ENCODE measurements at regions of chr6 and their contacts with region 1.

Region 1: DNA sequence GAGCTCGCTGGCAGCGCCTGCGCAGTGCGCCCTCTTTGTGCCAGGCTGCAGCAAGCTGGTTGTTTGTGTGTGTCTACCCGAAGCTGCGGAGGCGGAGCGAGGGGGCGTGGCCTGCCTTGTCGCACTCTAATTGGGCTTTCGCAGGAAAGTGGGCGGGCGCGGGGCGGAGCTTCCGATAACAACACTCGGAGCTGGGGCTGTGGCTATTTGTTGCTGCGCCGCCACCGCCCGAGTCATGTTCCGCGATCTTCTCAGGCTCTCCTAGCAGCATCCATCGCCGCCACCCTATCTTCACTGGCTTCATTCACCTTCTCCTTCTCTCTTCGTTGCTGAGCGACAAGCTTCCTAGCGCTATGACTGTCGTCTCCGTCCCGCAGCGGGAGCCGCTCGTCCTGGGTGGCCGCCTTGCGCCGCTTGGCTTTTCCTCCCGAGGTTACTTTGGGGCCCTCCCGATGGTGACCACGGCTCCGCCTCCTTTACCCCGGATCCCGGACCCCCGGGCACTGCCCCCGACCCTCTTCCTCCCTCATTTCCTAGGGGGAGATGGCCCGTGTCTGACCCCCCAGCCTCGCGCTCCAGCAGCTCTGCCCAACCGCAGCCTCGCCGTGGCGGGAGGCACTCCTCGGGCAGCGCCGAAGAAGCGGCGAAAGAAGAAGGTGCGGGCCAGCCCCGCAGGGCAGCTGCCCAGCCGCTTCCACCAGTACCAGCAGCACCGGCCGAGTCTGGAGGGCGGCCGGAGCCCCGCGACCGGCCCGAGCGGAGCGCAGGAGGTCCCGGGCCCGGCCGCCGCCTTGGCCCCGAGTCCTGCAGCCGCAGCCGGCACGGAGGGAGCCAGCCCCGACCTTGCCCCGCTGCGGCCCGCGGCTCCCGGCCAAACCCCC is at the start of gene PNRC1:
- DNase-seq: peak; percentile 100
- H3K4me3 Mint-ChIP-seq: peak within 1 kb of the TSS; percentile 92
- H3K27ac Mint-ChIP-seq: peak within 1 kb of the TSS; percentile 95
- H3K4me1 Mint-ChIP-seq: peaks cover 24% of the 10 kb centered on the region
- H3K27me3 Mint-ChIP-seq: no peaks in the 10 kb centered on the region
- total RNA-seq, gene PNRC1: 60.7 and 66.0 TPM in 2 replicates

Region 2: DNA sequence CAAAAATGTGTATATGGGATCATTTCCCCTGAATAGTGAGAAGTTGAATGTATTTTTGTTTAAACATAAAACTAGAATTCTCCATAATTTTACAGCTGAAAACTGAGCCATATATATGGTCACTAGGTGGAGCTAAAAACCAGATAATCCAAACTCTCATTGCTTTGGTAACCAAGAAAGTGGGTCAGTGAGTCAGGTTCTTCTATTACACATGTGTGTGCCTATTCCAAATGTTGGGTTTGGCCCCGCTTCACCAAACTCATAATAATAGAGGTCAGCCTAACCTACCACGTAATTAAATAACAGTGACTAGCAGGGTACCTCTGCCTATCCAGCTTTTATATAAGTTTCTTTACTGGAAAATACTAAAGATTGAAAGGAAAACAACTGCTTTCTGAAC is 98.1 kb before region 1 on chr6:
- intact Hi-C with region 1: loop called (anchors 5 kb)
- DNase-seq: no peak
- H3K4me3 Mint-ChIP-seq: no peak overlapping the region
- H3K27ac Mint-ChIP-seq: no peak overlapping the region
- H3K4me1 Mint-ChIP-seq: no peaks in the 10 kb centered on the region
- H3K27me3 Mint-ChIP-seq: peaks cover 10% of the 10 kb centered on the region

Region 3: GRCh38 chr6:89066940-89067646 is 13.7 kb before region 1 on chr6:
- intact Hi-C with region 1: no loop called
- DNase-seq: no peak
- H3K4me3 Mint-ChIP-seq: no peak overlapping the region
- H3K27ac Mint-ChIP-seq: no peak overlapping the region
- H3K4me1 Mint-ChIP-seq: no peaks in the 10 kb centered on the region
- H3K27me3 Mint-ChIP-seq: peaks cover 14% of the 10 kb centered on the region

Region 4: DNA sequence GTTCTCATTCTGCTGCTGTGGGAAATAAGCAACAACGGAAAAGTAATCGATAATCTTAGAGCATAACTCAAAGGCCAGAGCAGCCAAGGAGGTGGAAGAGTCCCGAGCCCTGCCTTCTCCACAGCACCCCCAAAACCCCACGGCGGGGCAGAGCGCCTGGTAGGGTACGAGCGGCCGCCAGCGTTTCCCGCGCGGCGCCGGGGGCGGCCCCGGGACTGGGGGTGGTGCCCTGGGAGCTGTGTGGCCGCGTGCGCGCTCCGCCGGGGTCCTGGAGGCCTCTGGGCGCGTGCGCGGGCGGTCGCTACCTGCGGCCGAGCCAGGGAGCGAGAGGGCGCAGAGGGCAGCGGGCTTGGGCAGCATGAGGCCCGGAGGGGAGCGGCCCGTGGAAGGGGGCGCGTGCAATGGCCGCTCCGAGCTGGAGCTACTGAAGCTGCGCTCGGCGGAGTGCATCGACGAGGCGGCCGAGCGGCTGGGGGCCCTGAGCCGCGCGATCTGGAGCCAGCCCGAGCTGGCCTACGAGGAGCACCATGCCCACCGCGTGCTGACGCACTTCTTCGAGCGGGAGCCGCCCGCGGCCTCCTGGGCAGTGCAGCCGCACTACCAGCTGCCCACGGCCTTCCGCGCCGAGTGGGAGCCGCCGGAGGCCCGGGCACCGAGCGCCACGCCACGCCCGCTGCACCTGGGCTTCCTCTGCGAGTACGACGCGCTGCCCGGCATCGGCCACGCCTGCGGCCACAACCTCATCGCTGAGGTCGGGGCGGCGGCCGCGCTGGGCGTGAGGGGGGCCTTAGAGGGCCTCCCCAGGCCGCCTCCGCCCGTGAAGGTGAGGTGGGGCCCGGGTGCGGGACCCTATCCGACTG is 65.2 kb after region 1 on chr6 and contains the start of gene PM20D2:
- intact Hi-C with region 1: loop called (anchors 1 kb)
- DNase-seq: peak; percentile 62
- H3K4me3 Mint-ChIP-seq: peak within 1 kb of the TSS; percentile 89
- H3K27ac Mint-ChIP-seq: peak within 1 kb of the TSS; percentile 98
- H3K4me1 Mint-ChIP-seq: peaks cover 35% of the 10 kb centered on the region
- H3K27me3 Mint-ChIP-seq: peaks cover 8% of the 10 kb centered on the region
- total RNA-seq, gene PM20D2: 14.8 and 15.3 TPM in 2 replicates

Region 5: GRCh38 chr6:89260832-89261231 is 180.1 kb after region 1 on chr6:
- intact Hi-C with region 1: no loop called
- DNase-seq: no peak
- H3K4me3 Mint-ChIP-seq: no peak overlapping the region
- H3K27ac Mint-ChIP-seq: no peak overlapping the region
- H3K4me1 Mint-ChIP-seq: no peaks in the 10 kb centered on the region
- H3K27me3 Mint-ChIP-seq: peaks cover 4% of the 10 kb centered on the region

Region 6: DNA sequence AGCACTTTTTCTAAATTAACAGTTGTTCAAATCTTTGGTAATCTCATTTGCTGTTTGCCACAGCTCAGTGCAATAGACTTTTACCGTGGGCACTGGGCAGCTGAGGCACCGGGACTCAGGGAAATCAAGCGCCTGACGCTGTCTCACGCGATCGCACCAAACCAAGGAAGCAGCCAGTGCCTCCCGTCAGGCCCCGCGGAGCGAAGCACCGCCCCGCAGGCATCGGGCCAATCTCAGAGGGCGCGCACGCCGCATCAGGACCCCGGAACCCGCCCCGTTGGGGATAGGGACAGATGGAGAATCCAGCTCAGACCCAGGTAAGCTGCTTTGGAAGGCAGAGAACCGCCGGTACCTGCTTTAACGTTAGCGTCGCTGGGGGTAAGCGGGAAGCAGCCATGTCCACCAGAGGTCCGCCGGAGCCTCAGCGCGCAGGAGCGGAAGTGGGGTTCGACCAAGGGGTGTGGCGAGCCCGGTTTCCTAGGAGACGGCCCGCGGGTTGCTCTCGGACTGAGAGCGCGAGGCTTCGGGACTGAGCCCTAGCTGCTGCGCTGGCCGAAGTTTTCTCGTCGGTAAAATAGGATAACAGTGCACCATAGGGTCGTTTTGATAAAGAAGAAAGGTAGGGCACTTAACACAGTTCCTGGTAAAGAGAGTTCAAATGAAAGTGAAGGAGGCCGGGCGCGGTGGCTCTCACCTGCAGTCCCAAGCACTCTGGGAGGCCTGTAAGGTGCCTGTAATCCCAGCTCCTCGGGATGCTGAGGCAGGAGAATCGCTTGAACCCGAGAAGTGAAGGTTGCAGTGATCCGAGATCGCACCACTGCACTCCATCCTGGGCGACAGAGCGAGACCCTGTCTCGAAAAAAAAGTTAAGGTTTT is 557.8 kb after region 1 on chr6 and contains the start of gene LYRM2:
- intact Hi-C with region 1: loop called (anchors 1 kb)
- DNase-seq: peak; percentile 89
- H3K4me3 Mint-ChIP-seq: peak within 1 kb of the TSS; percentile 84
- H3K27ac Mint-ChIP-seq: peak within 1 kb of the TSS; percentile 94
- H3K4me1 Mint-ChIP-seq: peaks cover 16% of the 10 kb centered on the region
- H3K27me3 Mint-ChIP-seq: no peaks in the 10 kb centered on the region
- total RNA-seq, gene LYRM2: 28.7 and 30.0 TPM in 2 replicates